Mucosa of descending colon (tissue), 3 donors: ENCODE measurements at regions of chr16 and their contacts with region 1.

Region 1: GRCh38 chr16:30571695-30572600 is at the start of gene ZNF688:
- DNase-seq: peak; percentile 93 to 96 (median 95)
- ATAC-seq: peak; percentile 86
- H3K4me3 ChIP-seq: peak within 1 kb of the TSS; percentile 50
- H3K4me1 ChIP-seq: peaks cover 33% of the 10 kb centered on the region
- CTCF ChIP-seq: no peak
- total RNA-seq, gene ZNF688: 17.0 to 23.0 (median 20.7) TPM

Region 2: GRCh38 chr16:30637942-30638341 is 66.0 kb after region 1 on chr16:
- intact Hi-C with region 1: loop called in 1 of 2 experiments (anchors 10 kb)
- DNase-seq: no peak
- ATAC-seq: no peak
- H3K4me3 ChIP-seq: no peak overlapping the region
- H3K4me1 ChIP-seq: peaks cover 7% of the 10 kb centered on the region
- CTCF ChIP-seq: no peak

Region 3: GRCh38 chr16:30896889-30897733 is 325.2 kb after region 1 on chr16:
- intact Hi-C with region 1: no loop called
- DNase-seq: peak; percentile 90 to 93 (median 91)
- ATAC-seq: peak; percentile 64
- H3K4me3 ChIP-seq: no peak overlapping the region
- H3K4me1 ChIP-seq: peaks cover 23% of the 10 kb centered on the region
- CTCF ChIP-seq: no peak